ENCODE measurements at regions of chr7 and their contacts with region 1.

Region 1: GRCh38 chr7:46131916-46132795 is 211.1 kb upstream of the IGFBP3 start:
- DNase-seq: no peak
- H3K4me3 ChIP-seq: no peak overlapping the region
- H3K27ac ChIP-seq: no peak overlapping the region
- H3K4me1 ChIP-seq: peaks cover 0 to 2% (median 0%) of the 10 kb centered on the region in 4 experiments; a peak in 2 of 7 replicates
- H3K27me3 ChIP-seq: no peaks in the 10 kb centered on the region
- CTCF ChIP-seq: peak; percentile 27 to 54 (median 36); a peak in 3 of 4 replicates
- EP300 ChIP-seq: no peak
- POLR2A ChIP-seq: no peak
- RAD21 ChIP-seq: peak; percentile 48 to 56

Region 2: DNA sequence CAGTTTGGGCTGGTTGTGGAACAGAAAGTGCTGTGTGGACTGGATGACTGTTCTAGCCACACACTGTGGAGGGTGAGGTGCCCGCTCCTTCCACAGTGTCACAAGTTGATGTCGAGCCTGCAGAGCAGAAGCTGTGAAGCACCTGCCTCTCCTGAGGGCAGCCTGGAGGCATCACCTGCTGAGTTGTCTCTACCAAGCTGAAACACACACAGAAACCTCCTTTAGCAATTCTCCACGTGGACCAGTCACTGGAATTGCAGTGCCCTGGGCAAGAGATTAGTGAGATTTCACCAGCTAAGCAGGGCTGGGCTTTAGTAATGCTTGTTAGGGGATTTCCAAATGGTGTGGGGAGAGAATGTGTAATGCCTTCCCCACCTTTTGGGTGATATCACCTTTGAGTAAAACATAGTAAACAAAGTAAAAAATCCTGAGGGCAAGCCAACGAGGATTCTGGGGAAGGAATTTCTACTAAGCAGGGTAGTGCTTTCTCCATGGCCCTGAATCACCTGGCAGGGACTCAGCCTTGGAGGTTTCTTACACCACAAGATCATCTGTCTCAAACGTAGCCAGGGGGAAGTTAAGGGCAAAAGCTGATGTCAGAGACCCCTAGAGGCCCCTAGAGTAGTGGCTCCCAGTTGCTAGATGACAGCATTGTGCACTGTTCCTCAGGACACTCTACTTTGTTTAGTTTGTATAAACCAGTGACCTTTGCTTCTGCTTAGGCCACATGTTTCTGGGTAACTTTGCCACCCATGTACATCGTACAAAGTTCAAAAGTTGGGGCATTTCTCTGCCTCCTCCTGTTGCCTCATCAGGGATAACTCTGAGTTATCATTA is 22.0 kb after region 1 on chr7:
- CTCF ChIA-PET with region 1: interaction called, 10 read pairs
- POLR2A ChIA-PET with region 1: no interaction called
- DNase-seq: no peak
- H3K4me3 ChIP-seq: no peak overlapping the region
- H3K27ac ChIP-seq: no peak overlapping the region
- H3K4me1 ChIP-seq: no peaks in the 10 kb centered on the region
- H3K27me3 ChIP-seq: no peaks in the 10 kb centered on the region
- CTCF ChIP-seq: peak in 2 of 3 experiments; percentile 3 to 26; a peak in 1 of 4 replicates
- EP300 ChIP-seq: no peak
- POLR2A ChIP-seq: no peak
- RAD21 ChIP-seq: peak; percentile 14 to 40; a peak in 2 of 4 replicates